Right ventricle myocardium inferior (tissue), 1 donor: ENCODE measurements at regions of chr20 and their contacts with region 1.

Region 1: GRCh38 chr20:63830841-63831588 is at the start of gene ZBTB46:
- DNase-seq: peak; percentile 88
- ATAC-seq: peak; percentile 33
- total RNA-seq, gene ZBTB46: 13.8 TPM

Region 2: DNA sequence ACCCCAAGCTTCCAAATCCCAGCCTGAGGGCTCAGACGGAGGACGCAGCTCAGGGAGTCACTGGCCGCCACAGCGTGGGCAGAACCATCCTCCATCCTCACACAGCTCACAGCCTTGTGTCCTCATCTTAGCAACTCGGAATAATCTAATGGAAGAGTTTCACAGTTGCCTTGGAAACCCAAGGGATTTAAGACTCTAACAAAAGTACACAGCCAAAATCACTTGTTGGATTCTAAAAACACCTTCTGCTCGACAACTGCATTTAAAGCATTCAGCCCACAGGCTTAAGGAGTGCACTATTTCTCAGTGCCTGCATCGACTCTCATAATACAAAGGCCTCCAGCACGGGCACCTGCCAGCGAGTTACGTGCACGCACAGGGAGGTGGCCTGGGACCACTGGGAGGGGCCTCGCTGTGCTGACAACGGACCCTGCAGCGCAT is 45.3 kb before region 1 on chr20:
- intact Hi-C with region 1: loop called (anchors 5 kb)
- DNase-seq: no peak
- ATAC-seq: no peak

Region 3: GRCh38 chr20:63807654-63808434 is 23.2 kb before region 1 on chr20:
- intact Hi-C with region 1: no loop called
- DNase-seq: no peak
- ATAC-seq: no peak

Region 4: DNA sequence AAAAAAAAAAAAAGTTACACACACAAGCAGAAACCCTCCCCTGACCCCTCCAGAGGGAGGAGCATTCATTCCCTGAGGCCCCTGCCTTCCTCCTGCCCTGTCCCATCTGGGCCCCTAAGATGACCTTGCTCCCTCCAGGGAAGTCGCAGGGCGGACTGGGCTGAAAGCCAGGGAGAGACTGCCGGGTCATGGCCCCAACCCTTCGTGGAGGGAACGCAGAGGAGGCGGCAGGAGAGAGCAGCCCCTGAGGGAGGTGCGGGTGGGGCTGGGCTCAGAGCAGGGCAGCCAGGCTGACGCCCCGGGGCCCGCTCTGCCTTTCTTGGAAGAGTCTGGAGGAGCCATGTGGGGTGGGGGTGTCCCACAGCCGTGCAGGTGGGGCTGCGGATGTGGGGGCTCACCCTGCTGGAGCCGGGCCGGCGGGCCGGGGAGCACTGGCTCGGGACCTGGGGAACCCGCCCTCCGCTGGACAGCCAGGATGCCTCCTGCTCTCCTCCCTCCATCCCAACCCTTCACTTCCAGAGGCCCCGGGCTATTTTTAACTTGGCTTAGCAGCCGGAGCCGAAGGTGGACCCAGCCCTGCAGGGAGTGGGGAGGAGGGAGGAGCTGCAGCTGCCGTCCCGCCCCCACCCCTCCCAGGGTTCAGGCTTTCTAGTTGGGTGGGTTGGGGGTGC is 15.2 kb after region 1 on chr20:
- intact Hi-C with region 1: loop called (anchors 2 kb)
- DNase-seq: peak; percentile 84
- ATAC-seq: peak; percentile 83